ENCODE measurements at regions of chr20 and their contacts with region 1.

Region 1: DNA sequence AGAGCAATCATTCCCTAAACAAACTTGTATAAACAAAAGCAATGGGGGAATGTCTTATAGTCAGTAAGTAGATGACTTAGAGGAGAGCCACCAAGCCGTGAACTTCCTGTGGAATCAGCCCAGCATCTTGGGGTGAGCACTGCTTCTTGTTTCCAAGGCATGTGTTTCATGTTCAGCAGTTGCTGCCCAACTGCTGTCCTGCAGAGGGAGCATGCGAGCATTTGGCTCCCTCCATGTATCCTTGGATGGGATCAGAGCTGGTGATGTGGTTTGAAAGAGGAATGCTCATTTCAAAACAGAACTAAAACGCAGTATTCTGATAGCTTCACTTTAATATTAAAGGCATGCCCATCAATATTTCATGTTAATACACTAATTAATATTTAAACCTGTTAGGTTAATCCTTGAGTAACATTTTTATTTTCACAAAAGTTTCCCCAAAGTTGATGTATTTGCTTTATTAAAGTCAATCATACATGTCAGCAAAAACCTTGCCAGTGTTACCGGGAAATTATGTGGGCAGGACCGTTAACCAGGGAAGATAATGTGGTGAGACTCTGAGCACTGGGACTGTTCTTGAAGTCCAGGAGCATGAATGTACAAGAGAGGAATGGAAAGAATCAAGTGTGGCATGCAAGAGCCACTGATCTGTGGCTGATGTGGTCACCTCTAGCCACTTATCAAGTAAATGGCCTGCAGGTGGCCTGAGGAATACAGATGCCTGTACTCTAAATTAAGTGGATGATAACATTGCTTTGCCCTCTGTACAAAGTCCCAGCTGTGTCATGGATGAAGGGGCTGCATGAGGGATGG is 172.2 kb upstream of the GGTLC1 start:
- DNase-seq: peak; percentile 39
- ATAC-seq: peak; percentile 94
- H3K4me3 ChIP-seq: no peak overlapping the region
- H3K27ac ChIP-seq: no peak overlapping the region
- H3K4me1 ChIP-seq: no peaks in the 10 kb centered on the region
- H3K27me3 ChIP-seq: no peaks in the 10 kb centered on the region
- CTCF ChIP-seq: peak; percentile 83
- EP300 ChIP-seq: no peak
- POLR2A ChIP-seq: no peak
- RAD21 ChIP-seq: 0 out of 2 replicates have a peak, but pooled peaks have one; percentile 33

Region 2: GRCh38 chr20:23889775-23890211 is 271.0 kb before region 1 on chr20:
- CTCF ChIA-PET with region 1: interaction called, 5 read pairs
- POLR2A ChIA-PET with region 1: no interaction called
- in situ Hi-C with region 1: no loop called
- intact Hi-C with region 1: loop called (anchors 1 kb)
- DNase-seq: peak; percentile 74
- ATAC-seq: peak; percentile 99
- H3K4me3 ChIP-seq: no peak overlapping the region
- H3K27ac ChIP-seq: no peak overlapping the region
- H3K4me1 ChIP-seq: no peaks in the 10 kb centered on the region
- H3K27me3 ChIP-seq: peaks cover 0 to 3% of the 10 kb centered on the region in 2 experiments; a peak in 1 of 5 replicates
- CTCF ChIP-seq: peak; percentile 98
- EP300 ChIP-seq: no peak
- POLR2A ChIP-seq: no peak
- RAD21 ChIP-seq: peak; percentile 94

Region 3: GRCh38 chr20:23937303-23938117 is 223.3 kb before region 1 on chr20:
- CTCF ChIA-PET with region 1: interaction called, 6 read pairs
- POLR2A ChIA-PET with region 1: no interaction called
- in situ Hi-C with region 1: loop called (anchors 25 kb)
- intact Hi-C with region 1: loop called (anchors 1 kb)
- DNase-seq: peak; percentile 52
- ATAC-seq: peak; percentile 100
- H3K4me3 ChIP-seq: no peak overlapping the region
- H3K27ac ChIP-seq: no peak overlapping the region
- H3K4me1 ChIP-seq: no peaks in the 10 kb centered on the region
- H3K27me3 ChIP-seq: no peaks in the 10 kb centered on the region
- CTCF ChIP-seq: peak; percentile 95
- EP300 ChIP-seq: no peak
- POLR2A ChIP-seq: no peak
- RAD21 ChIP-seq: peak; percentile 95

Region 4: DNA sequence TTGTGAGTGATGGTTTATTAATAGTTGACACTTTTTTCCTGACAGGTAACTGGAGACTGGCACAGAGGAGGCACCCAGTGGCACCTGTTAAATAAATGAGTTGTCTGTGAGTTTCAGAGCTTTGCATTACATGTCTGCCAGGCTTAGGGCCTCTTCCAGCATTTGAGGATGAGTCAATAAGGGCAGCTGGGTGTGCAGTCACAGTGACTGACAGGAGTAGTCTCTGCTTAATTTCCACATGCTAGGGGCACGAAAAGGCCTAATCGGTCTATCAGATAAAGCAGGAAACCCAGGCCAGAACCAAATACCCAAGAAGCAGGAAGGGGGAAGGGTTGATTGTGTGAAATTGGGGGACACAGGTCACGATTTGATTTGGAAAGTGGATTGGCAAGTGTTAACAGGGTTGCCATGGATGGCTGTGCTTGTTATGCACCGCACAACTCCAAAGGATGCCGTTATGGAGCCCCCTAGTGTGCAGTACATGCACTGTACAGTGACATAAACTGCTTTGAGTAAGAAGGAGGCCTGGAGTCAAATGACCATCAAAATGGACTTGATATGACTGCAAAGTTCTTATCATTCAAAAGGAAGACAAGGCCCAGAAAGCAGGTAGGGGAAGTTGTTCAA is 60.3 kb before region 1 on chr20:
- CTCF ChIA-PET with region 1: no interaction called
- POLR2A ChIA-PET with region 1: no interaction called
- in situ Hi-C with region 1: no loop called
- intact Hi-C with region 1: loop called (anchors 2 kb)
- DNase-seq: peak; percentile 70
- ATAC-seq: peak; percentile 98
- H3K4me3 ChIP-seq: no peak overlapping the region
- H3K27ac ChIP-seq: no peak overlapping the region
- H3K4me1 ChIP-seq: no peaks in the 10 kb centered on the region
- H3K27me3 ChIP-seq: peaks cover 0 to 5% of the 10 kb centered on the region in 2 experiments; a peak in 1 of 5 replicates
- CTCF ChIP-seq: peak; percentile 84
- EP300 ChIP-seq: no peak
- POLR2A ChIP-seq: no peak
- RAD21 ChIP-seq: peak; percentile 63

Region 5: GRCh38 chr20:24134284-24134683 is 26.5 kb before region 1 on chr20:
- CTCF ChIA-PET with region 1: no interaction called
- POLR2A ChIA-PET with region 1: no interaction called
- in situ Hi-C with region 1: no loop called
- intact Hi-C with region 1: no loop called
- DNase-seq: no peak
- ATAC-seq: no peak
- H3K4me3 ChIP-seq: no peak overlapping the region
- H3K27ac ChIP-seq: no peak overlapping the region
- H3K4me1 ChIP-seq: no peaks in the 10 kb centered on the region
- H3K27me3 ChIP-seq: peaks cover 4 to 11% of the 10 kb centered on the region in 2 experiments; a peak in 1 of 5 replicates
- CTCF ChIP-seq: no peak
- EP300 ChIP-seq: no peak
- POLR2A ChIP-seq: no peak
- RAD21 ChIP-seq: no peak

Region 6: DNA sequence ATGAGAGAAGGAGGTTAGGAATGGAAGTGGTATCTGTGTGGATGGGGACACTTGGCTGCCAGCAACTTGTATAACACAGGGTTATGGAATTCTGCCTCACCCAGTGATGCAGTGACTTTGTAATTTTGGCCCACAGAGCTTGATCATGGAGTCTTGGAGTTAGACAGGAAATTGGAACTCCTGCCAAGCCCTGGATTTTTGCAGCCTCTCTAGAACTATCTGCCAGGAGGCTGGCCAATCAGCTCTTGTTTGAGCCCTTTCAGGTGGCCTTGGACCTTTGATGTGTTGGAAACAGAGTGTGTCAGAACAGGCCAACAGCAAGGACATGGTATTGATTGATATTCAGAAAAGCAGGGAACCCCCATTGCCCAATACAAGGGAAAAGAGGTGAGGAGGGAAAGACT is 14.5 kb before region 1 on chr20:
- CTCF ChIA-PET with region 1: no interaction called
- POLR2A ChIA-PET with region 1: no interaction called
- in situ Hi-C with region 1: no loop called
- intact Hi-C with region 1: no loop called
- DNase-seq: no peak
- ATAC-seq: no peak
- H3K4me3 ChIP-seq: no peak overlapping the region
- H3K27ac ChIP-seq: no peak overlapping the region
- H3K4me1 ChIP-seq: no peaks in the 10 kb centered on the region
- H3K27me3 ChIP-seq: no peaks in the 10 kb centered on the region
- CTCF ChIP-seq: no peak
- EP300 ChIP-seq: no peak
- POLR2A ChIP-seq: no peak
- RAD21 ChIP-seq: no peak

Region 7: GRCh38 chr20:24773751-24774201 is 613.0 kb after region 1 on chr20:
- CTCF ChIA-PET with region 1: no interaction called
- POLR2A ChIA-PET with region 1: no interaction called
- in situ Hi-C with region 1: loop called (anchors 10 kb)
- intact Hi-C with region 1: no loop called
- DNase-seq: no peak
- ATAC-seq: no peak
- H3K4me3 ChIP-seq: no peak overlapping the region
- H3K27ac ChIP-seq: no peak overlapping the region
- H3K4me1 ChIP-seq: no peaks in the 10 kb centered on the region
- H3K27me3 ChIP-seq: peaks cover 7 to 12% of the 10 kb centered on the region in 2 experiments; a peak in 3 of 5 replicates
- CTCF ChIP-seq: no peak
- EP300 ChIP-seq: no peak
- POLR2A ChIP-seq: no peak
- RAD21 ChIP-seq: no peak

Region 8: DNA sequence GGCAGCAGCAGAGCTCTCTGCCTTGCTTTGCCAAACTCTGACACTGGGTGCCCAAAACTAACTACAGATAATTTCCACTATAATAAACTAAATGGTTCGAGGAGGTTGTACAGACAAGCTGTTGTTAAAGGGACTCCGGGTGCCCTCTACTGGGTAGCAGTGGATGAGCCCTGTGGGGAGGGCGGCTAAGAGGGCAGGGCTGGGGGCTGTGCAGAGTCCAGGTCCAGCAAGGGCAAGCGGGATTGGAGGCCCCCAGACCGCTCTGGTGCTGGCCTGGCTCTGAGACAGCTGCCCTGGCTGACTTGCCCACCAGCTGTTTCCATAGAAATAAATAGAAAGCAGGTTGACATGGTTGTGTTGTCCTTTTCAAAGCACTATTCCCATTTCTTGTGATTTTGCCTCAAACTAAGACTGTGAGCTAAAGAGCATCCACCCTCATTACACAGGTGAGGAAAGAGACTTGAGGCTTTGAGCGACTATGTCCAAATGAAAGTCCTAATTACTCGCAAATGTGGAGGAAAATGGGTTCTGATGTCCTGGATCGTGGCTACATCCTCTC is 620.7 kb after region 1 on chr20:
- CTCF ChIA-PET with region 1: no interaction called
- POLR2A ChIA-PET with region 1: no interaction called
- in situ Hi-C with region 1: loop called (anchors 10 kb)
- intact Hi-C with region 1: loop called (anchors 2 kb)
- DNase-seq: peak; percentile 39
- ATAC-seq: peak; percentile 91
- H3K4me3 ChIP-seq: no peak overlapping the region
- H3K27ac ChIP-seq: no peak overlapping the region
- H3K4me1 ChIP-seq: no peaks in the 10 kb centered on the region
- H3K27me3 ChIP-seq: peaks cover 0 to 3% of the 10 kb centered on the region in 2 experiments; a peak in 2 of 5 replicates
- CTCF ChIP-seq: peak; percentile 74
- EP300 ChIP-seq: no peak
- POLR2A ChIP-seq: no peak
- RAD21 ChIP-seq: peak; percentile 50; the same call in 1 of the 2 replicates

Region 9: GRCh38 chr20:24917797-24918578 is 757.2 kb after region 1 on chr20:
- CTCF ChIA-PET with region 1: interaction called, 26 read pairs
- POLR2A ChIA-PET with region 1: no interaction called
- in situ Hi-C with region 1: loop called (anchors 5 kb)
- intact Hi-C with region 1: loop called (anchors 1 kb)
- DNase-seq: peak; percentile 53
- ATAC-seq: peak; percentile 94
- H3K4me3 ChIP-seq: no peak overlapping the region
- H3K27ac ChIP-seq: no peak overlapping the region
- H3K4me1 ChIP-seq: peaks cover 15% of the 10 kb centered on the region; the same call in 1 of the 2 replicates
- H3K27me3 ChIP-seq: peaks cover 6 to 35% of the 10 kb centered on the region in 2 experiments; a peak in 4 of 5 replicates
- CTCF ChIP-seq: peak; percentile 96
- EP300 ChIP-seq: no peak
- POLR2A ChIP-seq: no peak
- RAD21 ChIP-seq: peak; percentile 95

Measured in HepG2 (cell line).